GM10248 (cell line): ENCODE measurements at regions of chr16 and their contacts with region 1.

Region 1: GRCh38 chr16:19118938-19119431 is 5.2 kb downstream of the ITPRIPL2 start:
- DNase-seq: no peak
- CTCF ChIP-seq: no peak

Region 2: GRCh38 chr16:19105891-19106624 is 12.9 kb before region 1 on chr16:
- CTCF ChIA-PET with region 1: interaction called, 14 read pairs
- POLR2A ChIA-PET with region 1: interaction called, 6 read pairs
- DNase-seq: no peak
- CTCF ChIP-seq: no peak

Region 3: GRCh38 chr16:19316846-19317245 is 197.9 kb after region 1 on chr16:
- CTCF ChIA-PET with region 1: no interaction called
- POLR2A ChIA-PET with region 1: no interaction called
- DNase-seq: no peak
- CTCF ChIP-seq: no peak